Body of pancreas (tissue), 4 donors: ENCODE measurements at regions of chr3 and their contacts with region 1.

Region 1: DNA sequence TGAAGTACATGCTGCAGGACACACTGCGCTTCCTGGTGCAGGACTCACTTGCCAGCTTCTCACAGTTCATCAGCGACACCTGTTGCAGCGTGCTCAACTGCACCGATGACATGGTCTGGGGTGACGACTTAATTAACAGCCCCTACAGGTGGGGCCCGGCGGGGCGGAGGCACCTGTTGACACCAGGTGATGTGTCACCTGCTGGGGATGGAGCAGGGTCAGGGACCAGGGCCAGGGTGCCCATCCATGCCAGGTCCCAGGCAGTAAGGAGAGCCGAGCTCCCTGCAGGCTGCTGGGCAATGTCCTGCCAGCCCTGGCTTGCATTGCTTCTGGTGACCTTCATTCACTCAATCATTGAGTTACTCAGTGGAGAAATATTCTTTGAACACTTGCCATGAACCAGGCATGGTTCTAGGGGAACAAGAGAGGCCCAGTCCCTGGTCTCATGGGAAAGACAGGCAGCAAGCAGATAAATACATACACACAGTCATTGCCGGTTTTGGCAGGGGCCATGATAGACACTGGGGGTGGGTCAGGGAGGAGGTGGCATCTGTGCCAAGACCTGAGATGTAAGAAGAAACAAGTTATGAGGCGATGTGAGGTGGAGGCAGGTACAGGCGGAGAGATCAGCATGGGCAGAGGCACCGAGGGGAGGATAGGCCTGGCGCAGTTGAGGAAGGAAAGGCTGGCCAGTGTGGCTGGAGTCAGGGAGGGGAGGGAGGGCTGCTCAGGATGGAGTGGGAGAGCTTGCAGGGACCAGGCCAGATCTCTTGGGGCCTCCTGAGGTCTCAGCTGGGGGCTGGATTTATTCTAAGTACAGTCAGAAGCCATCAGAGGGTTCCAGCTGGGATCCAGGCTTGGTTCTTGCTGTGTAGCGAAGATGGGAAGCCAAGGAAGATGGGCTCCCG is 30.8 kb downstream of the DNAH1 start:
- DNase-seq: peak; percentile 32 to 67 (median 56)
- ATAC-seq: peak; percentile 83
- H3K4me3 ChIP-seq: no peak overlapping the region
- H3K27ac ChIP-seq: peak overlapping the region; percentile 45 to 74 (median 68)
- H3K4me1 ChIP-seq: peaks cover 21% of the 10 kb centered on the region
- H3K27me3 ChIP-seq: no peaks in the 10 kb centered on the region
- CTCF ChIP-seq: no peak
- POLR2A ChIP-seq: no peak

Region 2: GRCh38 chr3:52014613-52015012 is 332.3 kb before region 1 on chr3:
- intact Hi-C with region 1: loop called (anchors 10 kb)
- DNase-seq: no peak
- ATAC-seq: no peak
- H3K4me3 ChIP-seq: no peak overlapping the region
- H3K27ac ChIP-seq: no peak overlapping the region
- H3K4me1 ChIP-seq: no peaks in the 10 kb centered on the region
- H3K27me3 ChIP-seq: no peaks in the 10 kb centered on the region
- CTCF ChIP-seq: peak in 1 of 7 experiments; percentile 1
- POLR2A ChIP-seq: no peak

Region 3: GRCh38 chr3:52231502-52232293 is 115.2 kb before region 1 on chr3:
- intact Hi-C with region 1: loop called (anchors 5 kb)
- DNase-seq: peak; percentile 77 to 83 (median 82)
- ATAC-seq: peak; percentile 74
- H3K4me3 ChIP-seq: no peak overlapping the region
- H3K27ac ChIP-seq: no peak overlapping the region
- H3K4me1 ChIP-seq: peaks cover 6% of the 10 kb centered on the region
- H3K27me3 ChIP-seq: no peaks in the 10 kb centered on the region
- CTCF ChIP-seq: peak; percentile 84 to 93 (median 89)
- POLR2A ChIP-seq: no peak